PC-3 (cell line): ENCODE measurements at regions of chr1 and their contacts with region 1.

Region 1: DNA sequence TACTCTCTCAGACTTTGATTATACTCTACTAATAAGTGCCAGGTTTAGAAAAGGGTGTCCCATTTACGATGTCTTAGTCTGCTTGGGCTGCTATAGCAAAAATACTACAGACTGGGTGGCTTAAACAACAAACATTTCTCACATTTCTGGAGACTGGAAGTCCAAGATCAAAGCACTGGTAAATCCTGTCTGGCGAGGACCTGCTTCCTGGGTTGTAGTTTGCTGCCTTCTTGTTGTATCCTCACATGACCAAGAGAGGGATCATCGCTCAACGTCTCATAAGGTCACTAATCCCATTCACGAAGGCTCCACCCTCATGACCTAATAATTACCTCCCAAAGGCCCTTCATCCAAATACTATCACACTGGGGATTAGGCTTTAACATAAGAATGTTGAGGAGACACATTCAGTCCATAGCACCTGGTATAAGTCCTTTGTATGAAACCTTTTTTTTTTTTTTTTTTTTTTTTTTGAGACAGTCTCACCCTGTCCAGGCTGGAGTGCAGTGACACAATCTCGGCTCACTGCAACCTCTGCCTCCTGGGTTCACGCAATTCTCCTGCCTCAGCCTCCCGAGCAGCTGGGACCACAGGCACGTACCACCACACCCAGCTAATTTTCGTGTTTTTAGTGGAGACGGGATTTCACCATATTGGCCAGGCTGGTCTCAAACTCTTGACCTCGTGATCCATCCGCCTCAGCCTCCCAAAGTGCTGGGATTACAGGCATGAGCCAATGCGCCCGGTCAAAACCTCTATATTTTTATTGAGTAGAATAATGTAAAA is 12.2 kb downstream of the PRDX6 start:
- DNase-seq: peak; percentile 80
- ATAC-seq: peak; percentile 54
- H3K4me3 ChIP-seq: no peak overlapping the region
- H3K27ac ChIP-seq: no peak overlapping the region
- H3K4me1 ChIP-seq: peaks cover 8% of the 10 kb centered on the region; the same call in 1 of the 2 replicates
- H3K27me3 ChIP-seq: no peaks in the 10 kb centered on the region
- CTCF ChIP-seq: peak; percentile 63

Region 2: DNA sequence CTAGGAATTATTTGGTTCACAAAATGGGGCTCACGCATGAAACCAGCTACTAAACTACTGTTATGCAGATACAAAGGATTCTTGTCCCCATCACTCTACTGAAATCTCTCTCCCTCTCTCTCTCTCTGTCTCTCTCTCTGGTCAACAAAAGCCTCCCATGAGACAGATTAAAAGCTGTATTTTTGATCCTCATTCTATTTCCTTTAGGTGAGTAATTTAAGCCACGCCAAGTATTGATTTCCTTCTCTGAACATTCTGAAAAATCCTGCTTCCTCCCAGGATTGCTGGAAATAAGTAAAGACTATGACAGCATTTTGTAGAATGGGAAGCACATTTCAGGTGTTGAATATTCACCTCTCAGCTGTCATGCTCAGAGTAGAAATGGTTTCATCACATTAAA is 31.5 kb after region 1 on chr1:
- CTCF ChIA-PET with region 1: no interaction called
- POLR2A ChIA-PET with region 1: interaction called, 17 read pairs
- intact Hi-C with region 1: no loop called
- DNase-seq: peak; percentile 50
- ATAC-seq: peak; percentile 76
- H3K4me3 ChIP-seq: no peak overlapping the region
- H3K27ac ChIP-seq: no peak overlapping the region
- H3K4me1 ChIP-seq: no peaks in the 10 kb centered on the region
- H3K27me3 ChIP-seq: no peaks in the 10 kb centered on the region
- CTCF ChIP-seq: no peak

Region 3: GRCh38 chr1:173986951-173987350 is 497.6 kb after region 1 on chr1:
- CTCF ChIA-PET with region 1: no interaction called
- POLR2A ChIA-PET with region 1: no interaction called
- intact Hi-C with region 1: no loop called
- DNase-seq: no peak
- ATAC-seq: no peak
- H3K4me3 ChIP-seq: no peak overlapping the region
- H3K27ac ChIP-seq: no peak overlapping the region
- H3K4me1 ChIP-seq: no peaks in the 10 kb centered on the region
- H3K27me3 ChIP-seq: no peaks in the 10 kb centered on the region
- CTCF ChIP-seq: no peak